Calu3 (cell line): ENCODE measurements at regions of chr20 and their contacts with region 1.

Region 1: DNA sequence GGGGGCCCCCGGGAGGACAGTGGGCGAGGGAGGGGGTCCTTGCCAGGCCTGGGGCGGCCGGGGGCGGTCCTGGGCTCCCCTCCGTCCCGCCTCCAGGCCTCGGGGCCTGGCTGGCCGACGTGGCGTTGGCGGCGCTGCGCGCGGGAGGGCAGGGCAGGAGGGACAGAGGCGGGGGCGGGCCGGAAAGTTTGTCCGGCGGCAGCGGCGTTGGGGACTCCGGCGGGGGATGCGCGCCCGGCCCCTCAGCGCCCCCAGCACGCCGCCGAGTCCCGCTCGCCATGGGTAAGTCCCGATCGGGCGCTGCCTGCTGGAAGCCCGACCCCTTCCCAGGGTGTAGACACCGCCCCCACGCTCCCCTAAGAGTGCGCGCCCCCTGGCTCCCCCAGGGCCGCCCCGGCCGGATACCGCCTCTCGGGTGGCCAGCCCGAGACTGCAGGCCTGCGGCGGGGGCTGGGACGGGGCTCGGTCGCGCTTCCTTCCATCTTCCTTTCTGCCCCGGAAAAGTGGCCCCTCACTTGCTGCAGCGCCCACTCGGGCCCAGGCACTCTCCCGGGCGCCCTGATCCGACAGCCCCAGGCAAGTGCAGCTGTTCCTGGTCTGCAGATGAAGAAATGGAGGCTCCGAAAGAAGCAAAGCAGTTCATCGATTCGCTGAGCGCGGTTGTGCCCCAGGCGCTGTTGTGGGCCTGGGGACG is at the start of gene SLC2A10:
- DNase-seq: peak; percentile 85
- H3K4me3 Mint-ChIP-seq: peak within 1 kb of the TSS; percentile 85
- H3K27ac Mint-ChIP-seq: peak within 1 kb of the TSS; percentile 60
- H3K4me1 Mint-ChIP-seq: peaks cover 39% of the 10 kb centered on the region
- H3K27me3 Mint-ChIP-seq: no peaks in the 10 kb centered on the region
- CTCF ChIP-seq: no peak
- total RNA-seq, gene SLC2A10: 24.0 and 24.9 TPM in 2 replicates

Region 2: GRCh38 chr20:46739431-46740129 is 30.0 kb after region 1 on chr20:
- CTCF ChIA-PET with region 1: interaction called, 4 read pairs
- intact Hi-C with region 1: loop called (anchors 2 kb)
- DNase-seq: peak; percentile 78
- H3K4me3 Mint-ChIP-seq: peak overlapping the region; percentile 44
- H3K27ac Mint-ChIP-seq: peak overlapping the region; percentile 90
- H3K4me1 Mint-ChIP-seq: peaks cover 59% of the 10 kb centered on the region
- H3K27me3 Mint-ChIP-seq: no peaks in the 10 kb centered on the region
- CTCF ChIP-seq: no peak

Region 3: DNA sequence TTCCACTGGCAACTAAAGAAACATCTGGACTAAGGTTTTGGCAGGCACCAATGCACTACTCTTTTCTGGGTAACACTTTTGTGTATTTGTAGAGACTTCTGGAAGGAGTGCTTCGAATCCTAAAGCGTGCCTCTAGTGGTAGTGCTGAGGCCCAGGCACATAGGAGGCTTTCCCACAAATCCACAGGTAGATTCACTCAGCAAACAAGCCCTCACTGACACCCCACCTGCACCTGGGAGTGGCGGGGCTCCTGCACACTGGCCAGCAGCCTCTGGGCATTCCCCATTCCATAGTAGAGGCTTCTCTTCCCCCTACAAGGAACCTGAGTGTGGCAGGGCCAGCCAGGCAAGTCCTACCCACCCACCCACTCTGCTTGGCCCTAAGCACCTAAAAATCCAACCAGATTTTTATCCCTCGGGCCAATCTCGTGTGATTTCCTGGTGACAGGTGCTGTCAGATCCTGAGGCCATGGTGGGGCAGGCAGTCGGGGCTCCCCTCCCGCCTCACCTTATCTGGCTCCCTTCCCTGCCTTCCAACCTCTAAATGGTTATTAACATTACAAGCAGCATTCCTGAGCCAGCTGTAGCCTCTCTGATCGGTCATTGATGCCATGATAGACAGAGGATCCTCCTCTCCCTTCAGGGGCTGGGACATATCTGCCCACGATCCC is 82.2 kb after region 1 on chr20:
- CTCF ChIA-PET with region 1: no interaction called
- intact Hi-C with region 1: no loop called
- DNase-seq: peak; percentile 36
- H3K4me3 Mint-ChIP-seq: no peak overlapping the region
- H3K27ac Mint-ChIP-seq: no peak overlapping the region
- H3K4me1 Mint-ChIP-seq: no peaks in the 10 kb centered on the region
- H3K27me3 Mint-ChIP-seq: peaks cover 56% of the 10 kb centered on the region
- CTCF ChIP-seq: no peak